ENCODE measurements at regions of chr10 and their contacts with region 1.

Region 1: GRCh38 chr10:71383972-71384687 is 12.6 kb upstream of the CDH23 start:
- DNase-seq: peak; percentile 61 to 77 (median 73)
- H3K4me3 ChIP-seq: no peak overlapping the region
- H3K4me3 Mint-ChIP-seq: no peak overlapping the region
- H3K27ac ChIP-seq: no peak overlapping the region
- H3K27ac Mint-ChIP-seq: peak overlapping the region in 4 of 7 donors; percentile 3 to 93 (median 61)
- H3K4me1 ChIP-seq: peaks cover 38 to 41% of the 10 kb centered on the region in 2 donors
- H3K4me1 Mint-ChIP-seq: peaks cover 24% of the 10 kb centered on the region
- H3K27me3 ChIP-seq: no peaks in the 10 kb centered on the region
- H3K27me3 Mint-ChIP-seq: peaks cover 0 to 4% (median 2%) of the 10 kb centered on the region in 3 donors
- CTCF ChIP-seq: peak; percentile 94

Region 2: DNA sequence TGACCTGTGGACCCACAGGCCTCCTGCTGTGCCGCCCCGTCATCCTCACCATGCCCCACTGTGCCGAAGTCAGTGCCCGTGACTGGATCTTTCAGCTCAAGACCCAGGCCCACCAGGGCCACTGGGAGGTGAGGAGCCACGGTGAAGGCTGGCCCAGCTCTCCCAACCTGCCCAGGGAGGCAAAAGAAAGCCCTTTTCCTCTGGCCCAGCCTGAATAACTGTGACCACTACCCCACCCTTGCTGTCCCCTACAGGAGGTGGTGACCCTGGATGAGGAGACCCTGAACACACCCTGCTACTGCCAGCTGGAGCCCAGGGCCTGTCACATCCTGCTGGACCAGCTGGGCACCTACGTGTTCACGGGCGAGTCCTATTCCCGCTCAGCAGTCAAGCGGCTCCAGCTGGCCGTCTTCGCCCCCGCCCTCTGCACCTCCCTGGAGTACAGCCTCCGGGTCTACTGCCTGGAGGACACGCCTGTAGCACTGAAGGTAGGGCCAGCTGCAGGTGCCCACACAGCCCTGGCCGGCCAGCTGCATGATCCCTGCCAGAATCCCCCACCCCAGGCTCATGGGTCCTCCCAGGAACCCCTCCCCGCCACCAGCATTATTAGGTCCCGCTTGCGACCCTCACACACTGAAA is 90.6 kb before region 1 on chr10:
- intact Hi-C with region 1: no loop called
- DNase-seq: no peak
- H3K4me3 ChIP-seq: no peak overlapping the region
- H3K4me3 Mint-ChIP-seq: no peak overlapping the region
- H3K27ac ChIP-seq: no peak overlapping the region
- H3K27ac Mint-ChIP-seq: no peak overlapping the region
- H3K4me1 ChIP-seq: peaks cover 1 to 3% of the 10 kb centered on the region in 2 donors
- H3K4me1 Mint-ChIP-seq: peaks cover 15% of the 10 kb centered on the region
- H3K27me3 ChIP-seq: no peaks in the 10 kb centered on the region
- H3K27me3 Mint-ChIP-seq: peaks cover 0 to 9% (median 1%) of the 10 kb centered on the region in 3 donors
- CTCF ChIP-seq: no peak

Region 3: DNA sequence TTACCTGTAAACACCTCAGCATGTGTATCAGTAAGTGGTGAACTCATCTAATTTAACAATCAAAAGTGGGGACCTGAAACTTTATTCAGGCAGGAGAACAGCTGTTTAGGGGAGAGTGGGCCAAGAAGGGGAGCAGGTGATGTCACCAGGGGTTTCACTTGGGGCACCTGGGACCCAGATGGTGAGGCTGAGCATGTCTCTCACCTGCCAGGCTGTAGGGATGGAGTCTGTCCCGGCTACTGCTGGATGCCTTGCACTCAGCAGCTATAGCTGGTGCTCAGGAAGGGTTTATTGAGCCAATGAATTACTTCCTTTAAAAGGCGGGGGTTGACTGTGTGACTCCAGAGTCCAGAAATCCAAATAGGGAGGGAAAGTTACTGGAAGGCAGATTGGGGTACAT is 35.6 kb after region 1 on chr10:
- intact Hi-C with region 1: no loop called
- DNase-seq: no peak
- H3K4me3 ChIP-seq: no peak overlapping the region
- H3K4me3 Mint-ChIP-seq: no peak overlapping the region
- H3K27ac ChIP-seq: no peak overlapping the region
- H3K27ac Mint-ChIP-seq: no peak overlapping the region
- H3K4me1 ChIP-seq: no peaks in the 10 kb centered on the region
- H3K4me1 Mint-ChIP-seq: no peaks in the 10 kb centered on the region
- H3K27me3 ChIP-seq: no peaks in the 10 kb centered on the region
- H3K27me3 Mint-ChIP-seq: peaks cover 8 to 18% (median 14%) of the 10 kb centered on the region in 3 donors
- CTCF ChIP-seq: no peak

Region 4: DNA sequence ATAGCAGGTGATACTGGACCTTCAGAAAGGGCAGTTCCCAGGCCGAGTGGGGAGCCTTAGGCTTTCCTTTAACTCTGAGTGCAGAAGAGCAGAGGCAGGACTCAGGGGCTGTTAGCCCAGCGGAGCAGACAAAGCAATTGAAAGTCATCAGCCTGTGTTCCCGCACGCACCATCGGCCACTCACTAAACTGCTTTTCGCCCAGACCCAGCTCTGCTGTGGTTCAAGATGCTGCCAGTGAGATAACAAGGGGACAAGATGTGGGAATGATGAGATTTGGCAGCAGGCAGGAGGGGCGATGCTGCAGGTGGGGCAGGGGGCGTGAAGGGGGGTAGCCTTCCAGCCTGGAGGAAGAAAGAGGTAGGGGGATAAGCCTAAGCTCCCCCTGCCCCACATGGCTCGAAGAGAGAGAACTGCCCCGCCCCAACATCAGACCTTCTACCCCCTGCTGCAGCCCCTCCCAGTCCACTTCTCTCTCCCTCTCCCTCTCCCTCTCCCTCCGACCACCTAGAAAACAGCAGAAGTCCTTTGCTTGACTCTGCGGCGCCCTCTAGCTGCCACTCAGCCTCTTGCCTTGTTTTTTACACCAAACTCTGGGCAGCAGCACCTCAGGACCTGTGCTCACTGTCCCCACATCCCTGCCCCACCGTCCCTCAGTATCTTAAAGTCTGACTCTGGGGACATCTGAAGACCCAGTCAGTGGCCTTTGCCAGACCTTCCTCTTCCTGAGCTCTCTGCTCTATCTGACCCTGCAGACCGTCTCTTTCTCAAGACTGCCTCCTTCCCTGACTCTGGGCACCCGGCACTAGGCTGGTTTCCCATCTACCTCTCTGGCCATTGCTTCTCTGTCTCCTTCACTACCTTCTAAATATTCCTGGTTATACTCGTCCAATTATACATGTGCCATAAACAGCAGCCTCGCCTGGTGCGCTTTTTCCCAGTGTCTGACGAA is 225.0 kb after region 1 on chr10:
- intact Hi-C with region 1: loop called in 1 of 2 experiments (anchors 10 kb)
- DNase-seq: peak; percentile 54 to 73 (median 71)
- H3K4me3 ChIP-seq: no peak overlapping the region
- H3K4me3 Mint-ChIP-seq: peak overlapping the region in 1 of 2 donors; percentile 32
- H3K27ac ChIP-seq: no peak overlapping the region
- H3K27ac Mint-ChIP-seq: peak overlapping the region in 1 of 7 donors; percentile 29
- H3K4me1 ChIP-seq: peaks cover 22 to 25% of the 10 kb centered on the region in 2 donors
- H3K4me1 Mint-ChIP-seq: peaks cover 32% of the 10 kb centered on the region
- H3K27me3 ChIP-seq: no peaks in the 10 kb centered on the region
- H3K27me3 Mint-ChIP-seq: peaks cover 2 to 4% (median 3%) of the 10 kb centered on the region in 3 donors
- CTCF ChIP-seq: peak; percentile 84

Region 5: DNA sequence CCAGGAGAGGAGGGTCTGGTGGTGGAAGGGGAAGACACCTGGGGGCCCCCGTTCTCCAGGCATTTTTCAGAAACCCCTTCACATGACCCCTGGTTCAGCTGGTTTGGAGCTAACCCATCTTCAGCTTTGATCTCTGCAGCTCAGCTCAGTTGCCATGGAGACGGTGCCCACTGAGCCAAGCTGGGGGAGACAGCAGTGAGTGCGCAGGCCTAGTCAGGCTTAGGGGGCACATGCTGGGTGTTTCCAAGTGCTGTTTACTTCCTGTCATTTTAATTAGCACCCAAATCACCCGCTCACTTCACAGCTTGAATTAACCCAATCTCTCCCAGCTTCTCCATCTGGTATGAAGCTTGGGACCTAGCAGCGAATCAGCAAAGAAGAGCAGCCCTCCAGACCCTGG is 695.2 kb after region 1 on chr10:
- intact Hi-C with region 1: no loop called
- DNase-seq: no peak
- H3K4me3 ChIP-seq: no peak overlapping the region
- H3K4me3 Mint-ChIP-seq: no peak overlapping the region
- H3K27ac ChIP-seq: no peak overlapping the region
- H3K27ac Mint-ChIP-seq: no peak overlapping the region
- H3K4me1 ChIP-seq: no peaks in the 10 kb centered on the region
- H3K4me1 Mint-ChIP-seq: peaks cover 6% of the 10 kb centered on the region
- H3K27me3 ChIP-seq: no peaks in the 10 kb centered on the region
- H3K27me3 Mint-ChIP-seq: peaks cover 4 to 10% (median 9%) of the 10 kb centered on the region in 3 donors
- CTCF ChIP-seq: no peak